ENCODE measurements at regions of chr4 and their contacts with region 1.

Region 1: DNA sequence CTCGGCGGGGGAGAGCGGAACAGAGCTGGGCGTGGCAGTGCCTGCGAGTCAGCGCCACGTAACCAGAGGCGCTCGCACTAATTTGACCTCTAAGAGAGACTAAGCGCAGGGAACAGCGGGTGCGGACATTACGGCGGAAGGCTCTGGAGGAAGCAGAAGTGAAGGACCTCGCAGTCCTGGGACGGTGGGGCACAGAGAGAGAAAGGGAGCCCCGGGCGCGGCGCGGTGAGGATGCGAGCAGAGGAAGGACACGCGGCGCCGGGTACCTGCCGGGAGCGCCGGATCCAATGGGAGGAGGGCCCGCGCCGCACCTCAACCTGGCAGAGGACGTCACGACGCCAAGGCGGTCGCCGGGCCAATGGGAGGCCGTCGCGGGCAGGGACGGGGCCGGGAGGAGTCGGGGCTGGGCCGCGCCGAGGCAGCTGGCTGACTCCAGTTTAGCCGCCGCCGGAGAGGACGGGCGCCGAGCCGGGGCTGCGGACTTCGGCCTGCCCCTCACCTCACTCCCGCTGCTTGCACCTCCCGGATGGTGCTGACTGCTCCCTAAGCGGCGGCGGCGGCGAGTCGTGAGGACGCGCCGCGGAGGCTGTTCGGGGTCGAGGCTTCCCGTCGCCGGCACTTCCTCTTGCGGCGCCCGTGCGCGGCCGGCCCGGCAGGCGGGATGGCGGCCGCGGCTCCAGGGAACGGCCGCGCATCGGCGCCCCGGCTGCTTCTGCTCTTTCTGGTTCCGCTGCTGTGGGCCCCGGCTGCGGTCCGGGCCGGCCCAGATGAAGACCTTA is at the start of gene TMEM165:
- DNase-seq: peak; percentile 97
- total RNA-seq, gene TMEM165: 132 to 149 TPM

Region 2: GRCh38 chr4:55853484-55854046 is 457.8 kb after region 1 on chr4 and contains the start of gene EXOC1:
- intact Hi-C with region 1: loop called in 1 of 2 experiments (anchors 5 kb)
- DNase-seq: peak; percentile 100
- total RNA-seq, gene EXOC1: 33.4 to 34.3 TPM

Measured in posterior vena cava (tissue), 2 donors.